ENCODE measurements at regions of chr13 and their contacts with region 1.

Region 1: GRCh38 chr13:79423801-79424642 is 18.0 kb upstream of the RBM26 start:
- DNase-seq: no peak
- H3K4me3 Mint-ChIP-seq: no peak overlapping the region
- H3K27ac Mint-ChIP-seq: no peak overlapping the region
- H3K4me1 Mint-ChIP-seq: peaks cover 26% of the 10 kb centered on the region
- H3K27me3 Mint-ChIP-seq: no peaks in the 10 kb centered on the region

Region 2: DNA sequence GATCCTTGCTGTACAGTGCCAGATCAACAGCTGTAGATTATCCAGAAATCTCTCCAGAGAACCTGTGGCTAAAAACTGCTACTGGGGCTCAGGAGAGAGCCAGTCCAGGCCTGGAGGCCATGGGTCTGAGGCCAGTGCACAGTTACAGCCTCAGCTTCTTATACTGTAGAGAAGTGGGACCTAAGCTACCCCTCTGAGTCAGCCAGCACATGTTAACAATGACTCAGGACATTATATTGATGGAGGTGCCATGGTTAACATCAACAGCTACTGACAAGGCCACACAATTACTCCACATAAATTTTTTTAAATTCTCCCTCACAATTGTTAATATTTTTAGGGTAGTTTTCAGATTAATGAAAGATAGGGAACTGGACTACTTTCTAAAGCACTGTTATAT is 156.5 kb before region 1 on chr13:
- intact Hi-C with region 1: no loop called
- DNase-seq: no peak
- H3K4me3 Mint-ChIP-seq: no peak overlapping the region
- H3K27ac Mint-ChIP-seq: no peak overlapping the region
- H3K4me1 Mint-ChIP-seq: no peaks in the 10 kb centered on the region
- H3K27me3 Mint-ChIP-seq: peaks cover 13% of the 10 kb centered on the region

Region 3: GRCh38 chr13:79445968-79446645 is 22.1 kb after region 1 on chr13:
- intact Hi-C with region 1: loop called (anchors 2 kb)
- DNase-seq: no peak
- H3K4me3 Mint-ChIP-seq: peak overlapping the region; percentile 4
- H3K27ac Mint-ChIP-seq: peak overlapping the region; percentile 54
- H3K4me1 Mint-ChIP-seq: peaks cover 56% of the 10 kb centered on the region
- H3K27me3 Mint-ChIP-seq: no peaks in the 10 kb centered on the region

Region 4: DNA sequence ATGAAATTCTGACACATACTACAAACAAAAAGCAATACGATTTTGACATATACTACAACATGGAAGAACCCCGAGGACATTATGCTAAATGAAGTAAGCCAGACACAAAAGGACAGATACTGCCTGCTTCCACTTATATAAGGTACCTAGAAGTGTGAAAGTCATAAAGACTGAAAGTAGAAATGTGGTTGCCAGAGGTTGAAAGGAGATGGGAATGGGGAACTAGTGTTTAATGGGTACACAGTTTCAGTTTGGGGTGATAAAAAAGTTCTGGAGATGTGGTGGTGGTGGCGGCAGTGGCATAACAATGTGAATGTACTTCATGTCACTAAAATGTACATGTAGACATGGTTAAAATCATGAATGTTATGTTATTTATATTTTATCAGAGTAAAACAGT is 44.8 kb after region 1 on chr13:
- intact Hi-C with region 1: loop called (anchors 5 kb)
- DNase-seq: no peak
- H3K4me3 Mint-ChIP-seq: no peak overlapping the region
- H3K27ac Mint-ChIP-seq: peak overlapping the region; percentile 7
- H3K4me1 Mint-ChIP-seq: peaks cover 43% of the 10 kb centered on the region
- H3K27me3 Mint-ChIP-seq: no peaks in the 10 kb centered on the region

Region 5: GRCh38 chr13:79541426-79542049 is 117.5 kb after region 1 on chr13:
- intact Hi-C with region 1: loop called (anchors 1 kb)
- DNase-seq: no peak
- H3K4me3 Mint-ChIP-seq: no peak overlapping the region
- H3K27ac Mint-ChIP-seq: no peak overlapping the region
- H3K4me1 Mint-ChIP-seq: peaks cover 43% of the 10 kb centered on the region
- H3K27me3 Mint-ChIP-seq: no peaks in the 10 kb centered on the region